Sciatic nerve (tissue), 2 donors: ENCODE measurements at regions of chr14 and their contacts with region 1.

Region 1: DNA sequence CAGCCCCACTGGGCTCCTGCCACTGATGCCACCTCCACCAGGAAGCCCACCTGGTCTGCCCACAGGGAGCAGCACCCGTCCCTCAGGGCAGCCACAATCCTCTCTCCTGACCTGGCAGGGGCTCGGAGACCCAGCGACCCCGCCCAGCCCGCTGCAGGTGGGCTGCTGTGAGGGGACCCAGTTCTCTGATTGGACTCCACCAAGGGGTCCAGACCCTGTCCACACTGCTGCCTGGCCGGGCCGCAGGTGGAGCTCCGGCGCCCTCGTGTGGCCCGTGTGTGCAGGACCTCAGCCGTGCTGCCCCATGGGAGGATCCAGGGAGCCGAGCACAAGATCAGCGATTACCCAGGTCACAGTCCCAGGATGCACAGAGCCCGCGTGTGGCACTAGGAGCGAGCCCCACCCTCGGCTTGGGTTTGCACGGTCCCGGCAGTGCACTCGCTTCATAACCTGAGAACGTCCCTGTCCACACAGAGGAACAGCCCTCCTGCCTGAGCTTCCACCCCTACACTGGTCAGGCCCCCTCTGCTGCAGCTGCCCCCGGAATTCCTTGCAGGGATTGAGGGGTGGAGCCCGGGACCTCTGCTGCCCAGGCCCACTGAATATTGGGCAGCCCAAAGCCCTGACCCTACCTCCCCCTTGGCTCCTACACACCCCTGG is 35.4 kb upstream of the TMEM179 start:
- DNase-seq: no peak
- ATAC-seq: peak; percentile 81

Region 2: DNA sequence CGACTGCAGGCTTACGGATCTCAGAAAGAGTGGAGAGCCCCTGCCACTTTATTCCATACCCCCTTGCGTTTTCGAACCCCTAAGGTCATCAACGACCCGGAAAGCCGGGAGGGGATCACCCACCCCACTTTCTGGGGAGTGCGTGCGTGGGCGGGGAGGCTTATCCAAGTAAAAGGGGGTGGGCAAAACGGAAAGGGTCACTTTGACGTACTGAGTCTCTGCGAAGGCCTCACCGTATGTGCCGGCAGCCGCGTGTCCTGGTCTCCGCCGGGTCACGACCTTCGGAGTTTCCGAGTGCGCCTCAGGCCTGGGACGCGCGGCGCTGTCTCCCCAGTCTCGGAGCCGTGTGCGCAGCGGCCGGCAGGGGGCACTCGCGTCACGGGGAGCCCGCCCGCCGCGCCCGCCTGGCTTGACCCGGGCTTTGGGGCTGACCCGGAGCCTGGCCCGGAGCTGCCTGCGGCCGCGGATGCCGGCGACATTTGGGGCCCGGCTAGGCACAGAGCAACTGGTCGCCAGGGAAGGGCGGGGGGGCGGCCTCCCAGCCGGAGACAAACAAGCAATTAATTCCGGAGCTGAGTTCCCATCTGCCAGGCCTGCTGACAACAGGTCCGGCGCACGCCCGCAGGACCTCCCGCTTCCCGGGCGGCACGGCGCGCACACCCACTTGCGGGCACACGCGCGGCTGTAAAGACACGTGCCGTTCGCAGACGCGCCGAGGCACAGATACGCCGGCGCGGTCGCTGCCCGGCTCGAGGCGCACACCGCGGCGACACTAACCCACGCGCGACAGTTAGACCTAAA is 502.5 kb before region 1 on chr14:
- intact Hi-C with region 1: loop called (anchors 5 kb)
- DNase-seq: peak; percentile 75
- ATAC-seq: peak; percentile 80